ENCODE measurements at regions of chr1 and their contacts with region 1.

Region 1: GRCh38 chr1:24744911-24745710 is at the start of gene CLIC4:
- DNase-seq: peak; percentile 99
- ATAC-seq: peak; percentile 89
- H3K4me3 ChIP-seq: peak within 1 kb of the TSS; percentile 79
- H3K27ac ChIP-seq: peak within 1 kb of the TSS; percentile 92
- H3K4me1 ChIP-seq: peaks cover 29% of the 10 kb centered on the region
- H3K27me3 ChIP-seq: no peaks in the 10 kb centered on the region
- CTCF ChIP-seq: peak; percentile 46
- POLR2A ChIP-seq: peak; percentile 99
- RAD21 ChIP-seq: peak; percentile 39
- total RNA-seq, gene CLIC4: 392 and 524 TPM in 2 replicates

Region 2: DNA sequence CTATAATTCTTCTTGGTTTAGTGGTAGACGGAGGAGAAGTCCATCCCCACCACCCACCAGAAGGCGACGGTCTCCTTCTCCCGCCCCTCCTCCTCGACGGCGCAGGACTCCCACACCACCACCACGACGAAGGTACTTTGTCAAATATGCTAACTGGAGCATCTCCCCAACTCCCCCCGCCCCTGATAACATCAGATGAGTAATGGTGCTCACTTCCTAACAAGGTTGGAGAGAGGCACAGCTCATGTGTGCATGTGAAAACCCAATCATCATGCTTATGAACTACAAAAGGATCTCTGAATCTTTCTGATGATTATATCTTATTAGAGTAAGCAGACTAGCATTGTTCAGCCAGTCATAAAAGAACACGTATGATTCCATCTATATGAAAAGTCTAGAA is 78.3 kb before region 1 on chr1:
- CTCF ChIA-PET with region 1: no interaction called
- POLR2A ChIA-PET with region 1: no interaction called
- dilution Hi-C with region 1: loop called (anchors 10 kb)
- in situ Hi-C with region 1: no loop called
- intact Hi-C with region 1: loop called (anchors 1 kb)
- DNase-seq: no peak
- ATAC-seq: no peak
- H3K4me3 ChIP-seq: no peak overlapping the region
- H3K27ac ChIP-seq: no peak overlapping the region
- H3K4me1 ChIP-seq: no peaks in the 10 kb centered on the region; the same call in 1 of the 2 replicates
- H3K27me3 ChIP-seq: no peaks in the 10 kb centered on the region
- CTCF ChIP-seq: no peak
- POLR2A ChIP-seq: no peak
- RAD21 ChIP-seq: no peak

Region 3: GRCh38 chr1:24769656-24770651 is 24.8 kb after region 1 on chr1:
- CTCF ChIA-PET with region 1: interaction called, 3 read pairs
- POLR2A ChIA-PET with region 1: interaction called, 4 read pairs
- dilution Hi-C with region 1: no loop called
- in situ Hi-C with region 1: no loop called
- intact Hi-C with region 1: loop called (anchors 1 kb)
- DNase-seq: peak; percentile 98
- ATAC-seq: peak; percentile 65
- H3K4me3 ChIP-seq: no peak overlapping the region
- H3K27ac ChIP-seq: peak overlapping the region; percentile 98
- H3K4me1 ChIP-seq: peaks cover 20% of the 10 kb centered on the region
- H3K27me3 ChIP-seq: no peaks in the 10 kb centered on the region
- CTCF ChIP-seq: no peak
- POLR2A ChIP-seq: no peak; the same call in 1 of the 2 replicates
- RAD21 ChIP-seq: no peak

Region 4: DNA sequence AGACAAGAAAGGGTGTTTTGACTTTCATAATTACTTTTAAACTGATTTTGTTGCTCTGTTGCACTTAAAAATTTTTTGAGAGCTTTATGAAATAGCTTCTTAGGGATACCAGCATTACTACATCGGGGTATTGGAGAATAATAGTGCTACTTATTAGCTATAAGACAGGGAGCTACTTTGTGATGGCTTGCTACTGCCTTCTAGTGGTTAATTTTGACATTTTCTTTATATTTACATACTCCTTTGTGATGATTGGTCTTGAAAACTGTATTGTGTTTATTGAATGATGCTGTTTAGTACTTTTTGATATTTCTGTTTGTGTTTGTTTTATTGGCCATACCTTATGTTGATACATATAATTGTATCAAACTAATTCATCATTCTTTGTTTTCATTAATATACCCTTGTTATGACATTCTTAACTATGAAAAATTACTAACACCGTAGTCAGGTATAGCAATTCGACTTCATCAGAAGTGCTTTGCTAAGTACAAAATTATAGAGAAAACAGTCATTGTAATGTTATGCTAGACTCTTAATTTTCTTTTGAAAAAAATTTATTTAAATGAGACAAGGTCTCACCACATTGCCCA is 85.7 kb after region 1 on chr1:
- CTCF ChIA-PET with region 1: interaction called, 5 read pairs
- POLR2A ChIA-PET with region 1: interaction called, 7 read pairs
- dilution Hi-C with region 1: no loop called
- in situ Hi-C with region 1: no loop called
- intact Hi-C with region 1: loop called (anchors 2 kb)
- DNase-seq: peak; percentile 79
- ATAC-seq: peak; percentile 76
- H3K4me3 ChIP-seq: no peak overlapping the region
- H3K27ac ChIP-seq: no peak overlapping the region
- H3K4me1 ChIP-seq: peaks cover 13% of the 10 kb centered on the region
- H3K27me3 ChIP-seq: no peaks in the 10 kb centered on the region
- CTCF ChIP-seq: peak; percentile 87
- POLR2A ChIP-seq: no peak
- RAD21 ChIP-seq: peak; percentile 81